Adrenal gland (tissue), 19 donors: ENCODE measurements at regions of chr12 and their contacts with region 1.

Region 1: DNA sequence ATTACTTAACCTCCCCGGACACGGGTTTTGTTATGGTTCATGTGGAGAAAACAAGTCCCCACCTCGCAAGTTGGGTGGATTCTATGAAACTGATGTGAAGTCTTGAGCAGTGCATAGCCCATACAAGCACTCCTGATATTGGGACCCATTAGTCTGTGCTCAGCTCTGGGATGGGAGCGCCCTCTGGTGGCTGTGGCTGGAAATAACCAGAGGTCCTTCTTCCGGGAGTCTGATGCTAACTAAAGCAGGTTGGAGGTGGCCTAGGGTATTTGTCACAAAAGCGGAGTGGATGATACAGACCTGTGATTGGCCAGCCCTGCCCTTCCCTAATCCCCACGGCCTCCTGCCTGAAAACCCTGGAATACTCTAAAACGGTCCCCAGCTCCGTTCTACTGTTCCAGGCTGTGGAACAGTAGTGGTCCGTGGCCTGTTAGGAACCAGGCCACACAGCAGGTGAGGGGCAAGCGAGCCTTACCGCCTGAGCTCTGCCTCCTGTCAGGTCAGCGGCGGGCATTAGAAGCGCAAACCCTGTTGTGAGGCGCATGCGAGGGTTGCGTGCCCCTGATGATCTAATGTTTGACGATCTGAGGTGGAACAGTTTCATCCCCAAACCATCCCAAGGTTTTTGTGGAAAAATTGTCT is 6.4 kb downstream of the SLC48A1 start:
- DNase-seq: peak; percentile 86 to 97 (median 90)
- H3K4me3 ChIP-seq: no peak overlapping the region
- H3K27ac ChIP-seq: peak overlapping the region in 2 of 5 donors; percentile 51 to 73
- H3K4me1 ChIP-seq: peaks cover 35 to 56% of the 10 kb centered on the region in 2 donors
- H3K27me3 ChIP-seq: no peaks in the 10 kb centered on the region
- CTCF ChIP-seq: peak; percentile 95 to 98 (median 97)
- POLR2A ChIP-seq: peak in 1 of 2 donors; percentile 1

Region 2: GRCh38 chr12:47742253-47742825 is 37.1 kb before region 1 on chr12:
- intact Hi-C with region 1: loop called in 1 of 2 experiments (anchors 5 kb)
- DNase-seq: peak in 6 of 7 donors; percentile 50 to 78 (median 61)
- H3K4me3 ChIP-seq: no peak overlapping the region
- H3K27ac ChIP-seq: no peak overlapping the region
- H3K4me1 ChIP-seq: peaks cover 8 to 24% of the 10 kb centered on the region in 2 donors
- H3K27me3 ChIP-seq: no peaks in the 10 kb centered on the region
- CTCF ChIP-seq: peak; percentile 91 to 98 (median 94)
- POLR2A ChIP-seq: no peak

Region 3: GRCh38 chr12:47832263-47832933 is 53.0 kb after region 1 on chr12:
- intact Hi-C with region 1: loop called (anchors 5 kb)
- DNase-seq: peak in 1 of 7 donors; percentile 11
- H3K4me3 ChIP-seq: no peak overlapping the region
- H3K27ac ChIP-seq: no peak overlapping the region
- H3K4me1 ChIP-seq: peaks cover 23 to 39% of the 10 kb centered on the region in 2 donors
- H3K27me3 ChIP-seq: no peaks in the 10 kb centered on the region
- CTCF ChIP-seq: no peak
- POLR2A ChIP-seq: no peak